ENCODE measurements at regions of chr14 and their contacts with region 1.

Region 1: GRCh38 chr14:68283378-68284123 is 464.0 kb downstream of the RAD51B start:
- DNase-seq: peak; percentile 88
- H3K4me3 Mint-ChIP-seq: peak overlapping the region; percentile 62
- H3K27ac Mint-ChIP-seq: peak overlapping the region; percentile 83
- H3K4me1 Mint-ChIP-seq: peaks cover 57% of the 10 kb centered on the region
- H3K27me3 Mint-ChIP-seq: no peaks in the 10 kb centered on the region

Region 2: GRCh38 chr14:68312884-68313610 is 29.5 kb after region 1 on chr14:
- intact Hi-C with region 1: loop called (anchors 2 kb)
- DNase-seq: no peak
- H3K4me3 Mint-ChIP-seq: peak overlapping the region; percentile 10
- H3K27ac Mint-ChIP-seq: no peak overlapping the region
- H3K4me1 Mint-ChIP-seq: peaks cover 22% of the 10 kb centered on the region
- H3K27me3 Mint-ChIP-seq: no peaks in the 10 kb centered on the region

Region 3: GRCh38 chr14:68369281-68370056 is 85.9 kb after region 1 on chr14:
- intact Hi-C with region 1: loop called (anchors 1 kb)
- DNase-seq: no peak
- H3K4me3 Mint-ChIP-seq: peak overlapping the region; percentile 10
- H3K27ac Mint-ChIP-seq: peak overlapping the region; percentile 25
- H3K4me1 Mint-ChIP-seq: peaks cover 22% of the 10 kb centered on the region
- H3K27me3 Mint-ChIP-seq: no peaks in the 10 kb centered on the region

Region 4: DNA sequence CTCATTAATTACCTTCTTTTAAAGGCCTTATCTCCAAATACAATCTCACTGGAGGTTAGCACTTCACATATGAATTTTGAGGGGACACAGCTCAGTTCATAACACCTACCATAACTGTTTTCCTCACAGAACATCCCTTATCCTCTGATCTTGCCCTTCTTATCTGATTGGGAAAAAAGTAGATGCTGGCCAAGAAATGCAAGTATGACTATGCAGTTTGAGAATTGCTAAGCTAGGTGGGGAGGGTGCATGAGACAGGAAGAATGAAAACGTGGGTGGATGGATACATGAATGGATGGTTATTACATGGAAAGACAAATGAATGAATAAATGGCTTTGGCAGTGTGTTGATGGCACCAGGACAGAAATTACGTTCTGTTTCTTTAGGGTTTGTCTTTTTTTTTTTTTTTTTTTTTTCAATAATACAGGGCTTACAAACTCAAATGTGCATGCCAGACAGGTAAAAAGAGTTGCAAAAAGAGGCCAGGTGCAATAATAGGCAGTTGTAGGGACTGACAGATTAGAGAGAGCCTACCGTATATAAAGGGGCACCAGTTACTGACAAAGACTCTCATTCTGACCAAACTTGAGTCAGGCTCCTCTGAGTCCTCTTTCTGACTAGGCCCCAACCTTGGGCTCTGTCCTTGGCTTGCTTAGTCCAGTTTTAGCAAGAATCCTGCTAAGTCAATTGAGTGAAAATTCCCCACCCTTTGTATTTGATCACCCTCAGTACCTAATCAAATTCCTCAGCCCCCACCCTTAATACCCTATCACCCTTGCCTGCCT is 204.4 kb after region 1 on chr14:
- intact Hi-C with region 1: loop called (anchors 2 kb)
- DNase-seq: no peak
- H3K4me3 Mint-ChIP-seq: no peak overlapping the region
- H3K27ac Mint-ChIP-seq: no peak overlapping the region
- H3K4me1 Mint-ChIP-seq: peaks cover 25% of the 10 kb centered on the region
- H3K27me3 Mint-ChIP-seq: no peaks in the 10 kb centered on the region